ENCODE measurements at regions of chr11 and their contacts with region 1.

Region 1: DNA sequence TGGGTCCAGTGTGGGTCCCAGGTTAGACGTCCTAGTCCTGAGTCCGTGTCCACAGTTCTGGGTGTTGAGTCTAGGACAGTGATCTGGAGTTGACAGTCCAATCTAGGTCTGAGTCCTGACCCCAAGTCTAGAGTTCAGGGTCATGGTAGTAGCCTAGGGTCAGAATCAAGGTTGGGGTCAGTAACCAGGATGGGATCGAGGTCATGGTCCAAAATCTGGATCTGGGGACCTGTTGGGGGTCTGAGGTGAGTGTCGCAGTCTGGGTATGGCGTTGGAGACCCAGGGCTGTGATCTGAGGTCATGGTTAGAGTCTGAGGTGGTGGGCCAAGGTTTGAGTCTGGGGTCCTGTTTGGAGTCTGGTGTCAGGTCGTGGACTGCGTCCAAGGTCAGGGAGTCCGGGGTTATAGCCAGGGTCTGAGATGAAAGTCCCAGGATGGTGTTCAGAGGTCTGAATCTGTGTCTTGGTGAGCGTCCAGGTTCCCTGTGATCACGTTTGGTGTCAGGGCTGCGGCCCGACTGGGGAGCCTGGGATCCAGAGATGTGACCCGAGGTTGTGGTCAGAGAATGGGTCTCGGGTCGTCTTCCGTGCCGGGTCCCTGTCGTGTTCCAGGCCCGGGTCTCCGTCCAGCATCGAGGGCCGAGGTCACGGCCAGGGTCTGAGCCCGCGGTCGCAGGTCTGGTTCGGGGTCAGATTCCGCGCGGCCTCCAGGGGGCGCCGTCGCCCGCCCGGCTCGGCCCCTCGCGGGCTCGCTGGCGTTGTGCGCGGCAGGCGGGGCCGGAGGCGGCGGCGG is 445 bp upstream of the GRK2 start:
- DNase-seq: peak; percentile 94
- H3K4me3 ChIP-seq: peak overlapping the region in 1 of 2 experiments; percentile 90; a peak in 2 of 4 replicates
- H3K27ac ChIP-seq: peak overlapping the region in 1 of 2 experiments; percentile 53; a peak in 2 of 4 replicates
- H3K4me1 ChIP-seq: peaks cover 14 to 35% of the 10 kb centered on the region in 2 experiments; a peak in 2 of 4 replicates
- H3K27me3 ChIP-seq: no peaks in the 10 kb centered on the region
- CTCF ChIP-seq: peak; percentile 67
- EP300 ChIP-seq: no peak
- RAD21 ChIP-seq: peak; percentile 64

Region 2: DNA sequence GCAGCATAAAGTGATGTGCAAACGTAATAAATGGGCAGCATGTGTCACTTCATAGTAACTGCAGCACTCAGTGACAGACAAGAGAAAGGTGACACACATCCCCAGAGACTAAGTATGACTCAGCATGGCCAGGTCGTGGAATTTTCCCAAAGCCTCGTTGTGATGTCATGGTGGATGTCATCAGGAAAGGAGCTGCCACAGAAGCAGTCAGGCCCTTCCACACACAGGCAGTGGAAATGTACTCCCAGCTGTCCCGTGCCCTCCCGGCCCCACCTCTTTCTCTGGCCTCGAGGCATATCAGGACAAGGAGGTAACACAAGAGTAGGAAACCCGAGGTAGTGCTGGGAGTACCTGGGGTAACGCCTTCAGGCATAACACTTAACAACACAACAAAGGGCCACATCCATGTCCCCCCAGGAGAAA is 315.7 kb before region 1 on chr11:
- CTCF ChIA-PET with region 1: no interaction called
- POLR2A ChIA-PET with region 1: no interaction called
- DNase-seq: no peak
- H3K4me3 ChIP-seq: no peak overlapping the region
- H3K27ac ChIP-seq: peak overlapping the region in 1 of 2 experiments; percentile 59; a peak in 2 of 4 replicates
- H3K4me1 ChIP-seq: peaks cover 11 to 41% of the 10 kb centered on the region in 2 experiments
- H3K27me3 ChIP-seq: no peaks in the 10 kb centered on the region
- CTCF ChIP-seq: no peak
- EP300 ChIP-seq: no peak
- RAD21 ChIP-seq: no peak

Region 3: DNA sequence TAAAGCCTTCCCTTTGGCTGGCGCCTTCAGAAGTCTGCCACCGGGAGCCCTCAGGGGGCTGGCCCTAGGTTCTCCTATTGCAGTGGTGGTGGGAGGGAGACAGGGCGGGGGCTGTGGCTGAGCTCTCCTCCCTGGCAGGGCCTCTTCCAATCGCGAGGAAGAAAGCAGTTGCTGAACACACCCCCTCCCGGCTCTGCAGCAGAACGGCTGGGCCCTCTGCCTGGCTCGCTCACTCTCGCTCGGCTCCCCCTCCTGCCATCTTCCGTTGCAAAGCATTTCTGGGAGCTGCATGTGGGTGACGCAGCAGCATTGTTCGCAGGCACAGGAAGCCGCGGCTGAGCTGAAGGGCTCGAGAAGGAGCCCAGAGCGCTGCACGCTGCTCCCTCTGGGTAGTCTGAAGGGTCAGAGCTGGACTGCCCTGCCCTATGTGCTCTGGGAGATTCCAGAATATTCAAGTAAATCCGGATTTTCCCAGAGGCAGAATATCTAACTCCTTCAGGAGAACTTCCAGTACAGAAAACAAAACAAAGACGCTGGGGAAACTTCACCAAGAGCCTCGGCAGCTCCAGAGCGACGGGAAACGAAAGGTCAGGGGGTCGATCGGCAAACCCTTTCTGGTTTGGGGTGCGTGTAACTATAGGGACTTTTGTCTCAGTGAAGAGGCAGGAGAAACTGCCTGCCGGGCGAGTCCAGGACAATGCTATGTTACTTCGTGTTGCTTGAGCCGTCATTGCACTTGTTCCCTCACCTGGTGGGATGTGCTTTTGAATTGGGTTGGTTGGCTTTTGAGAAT is 25.8 kb before region 1 on chr11:
- CTCF ChIA-PET with region 1: interaction called, 24 read pairs
- POLR2A ChIA-PET with region 1: no interaction called
- DNase-seq: peak; percentile 91
- H3K4me3 ChIP-seq: peak overlapping the region; percentile 70 to 89
- H3K27ac ChIP-seq: peak overlapping the region; percentile 89 to 96
- H3K4me1 ChIP-seq: peaks cover 7 to 24% of the 10 kb centered on the region in 2 experiments; a peak in 3 of 4 replicates
- H3K27me3 ChIP-seq: no peaks in the 10 kb centered on the region
- CTCF ChIP-seq: no peak
- EP300 ChIP-seq: peak in 1 of 2 experiments; percentile 60; a peak in 3 of 4 replicates
- RAD21 ChIP-seq: peak; percentile 4; the same call in 1 of the 2 replicates

Region 4: GRCh38 chr11:67277231-67277961 is 11.6 kb after region 1 on chr11:
- CTCF ChIA-PET with region 1: interaction called, 20 read pairs
- POLR2A ChIA-PET with region 1: no interaction called
- DNase-seq: no peak
- H3K4me3 ChIP-seq: no peak overlapping the region
- H3K27ac ChIP-seq: no peak overlapping the region; a peak in 1 of 4 replicates
- H3K4me1 ChIP-seq: peaks cover 0 to 6% of the 10 kb centered on the region in 2 experiments; a peak in 2 of 4 replicates
- H3K27me3 ChIP-seq: no peaks in the 10 kb centered on the region
- CTCF ChIP-seq: no peak
- EP300 ChIP-seq: no peak
- RAD21 ChIP-seq: no peak

Region 5: GRCh38 chr11:67288452-67289225 is 22.8 kb after region 1 on chr11:
- CTCF ChIA-PET with region 1: interaction called, 29 read pairs
- POLR2A ChIA-PET with region 1: interaction called, 3 read pairs
- DNase-seq: peak; percentile 97
- H3K4me3 ChIP-seq: peak overlapping the region; percentile 65 to 87
- H3K27ac ChIP-seq: peak overlapping the region; percentile 91 to 98
- H3K4me1 ChIP-seq: peaks cover 9 to 30% of the 10 kb centered on the region in 2 experiments; a peak in 3 of 4 replicates
- H3K27me3 ChIP-seq: no peaks in the 10 kb centered on the region
- CTCF ChIP-seq: peak; percentile 31; the same call in 1 of the 2 replicates
- EP300 ChIP-seq: peak in 1 of 2 experiments; percentile 5; a peak in 1 of 4 replicates
- RAD21 ChIP-seq: peak; percentile 26; the same call in 1 of the 2 replicates

Region 6: GRCh38 chr11:67317205-67317887 is 51.5 kb after region 1 on chr11:
- CTCF ChIA-PET with region 1: interaction called, 274 read pairs
- POLR2A ChIA-PET with region 1: interaction called, 19 read pairs
- DNase-seq: peak; percentile 98
- H3K4me3 ChIP-seq: peak overlapping the region; percentile 83 to 85
- H3K27ac ChIP-seq: peak overlapping the region; percentile 84 to 95
- H3K4me1 ChIP-seq: peaks cover 4 to 16% of the 10 kb centered on the region in 2 experiments; a peak in 1 of 4 replicates
- H3K27me3 ChIP-seq: no peaks in the 10 kb centered on the region
- CTCF ChIP-seq: peak; percentile 94
- EP300 ChIP-seq: no peak
- RAD21 ChIP-seq: peak; percentile 92

Region 7: GRCh38 chr11:67353317-67354074 is 87.7 kb after region 1 on chr11 and contains the start of gene POLD4:
- CTCF ChIA-PET with region 1: interaction called, 25 read pairs
- POLR2A ChIA-PET with region 1: no interaction called
- DNase-seq: peak; percentile 97
- H3K4me3 ChIP-seq: peak within 1 kb of the TSS; percentile 66 to 76
- H3K27ac ChIP-seq: peak within 1 kb of the TSS; percentile 92 to 99
- H3K4me1 ChIP-seq: peaks cover 44 to 51% of the 10 kb centered on the region in 2 experiments; a peak in 3 of 4 replicates
- H3K27me3 ChIP-seq: no peaks in the 10 kb centered on the region
- CTCF ChIP-seq: no peak
- EP300 ChIP-seq: no peak
- RAD21 ChIP-seq: no peak
- polyA plus RNA-seq, gene POLD4: 80.4 and 89.4 TPM in 2 replicates

Region 8: DNA sequence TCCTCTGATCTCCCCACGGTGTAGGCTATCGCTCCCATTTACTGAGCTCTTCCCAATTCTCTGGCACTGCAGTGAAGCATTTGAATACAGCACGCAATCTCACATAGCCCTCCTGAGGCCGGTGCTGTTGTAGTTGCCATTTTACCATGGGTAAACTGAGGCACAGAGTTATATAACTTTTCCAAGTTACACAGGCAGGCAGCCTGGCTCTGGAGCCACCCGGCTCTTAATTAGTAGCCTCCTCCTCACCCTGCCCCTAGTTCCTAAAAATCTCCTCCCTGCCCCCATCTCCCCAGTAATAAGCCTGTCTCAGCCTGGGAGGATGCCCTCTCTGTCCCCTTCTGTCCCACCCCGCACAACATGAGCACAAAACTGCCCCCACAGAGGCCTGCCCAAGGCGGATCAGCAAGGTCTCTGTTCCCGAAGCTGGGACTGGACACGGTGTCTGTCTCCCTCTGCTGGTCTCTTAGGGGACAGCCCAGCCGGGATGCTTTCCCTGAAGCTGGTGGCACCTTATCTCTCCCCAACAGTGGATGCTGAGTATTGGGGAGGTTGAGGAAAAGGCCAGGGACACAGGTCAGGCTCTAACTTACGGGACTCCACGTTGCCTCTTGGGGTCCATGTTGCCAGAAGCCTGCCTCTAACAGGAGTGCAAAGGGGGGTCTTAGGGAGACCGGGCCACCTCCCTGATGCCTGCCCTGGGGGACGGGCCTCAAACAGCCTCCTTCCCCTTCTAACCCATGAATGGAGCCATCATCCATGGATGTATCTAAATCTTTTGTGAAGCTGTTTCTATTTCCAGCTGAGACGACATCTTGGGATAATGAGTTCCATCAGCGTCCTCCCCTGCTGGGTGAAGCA is 116.7 kb after region 1 on chr11:
- CTCF ChIA-PET with region 1: interaction called, 75 read pairs
- POLR2A ChIA-PET with region 1: no interaction called
- DNase-seq: peak; percentile 86
- H3K4me3 ChIP-seq: no peak overlapping the region; a peak in 1 of 4 replicates
- H3K27ac ChIP-seq: no peak overlapping the region
- H3K4me1 ChIP-seq: peaks cover 20 to 29% of the 10 kb centered on the region in 2 experiments; a peak in 3 of 4 replicates
- H3K27me3 ChIP-seq: no peaks in the 10 kb centered on the region
- CTCF ChIP-seq: peak; percentile 94
- EP300 ChIP-seq: no peak
- RAD21 ChIP-seq: peak; percentile 99